ENCODE measurements at regions of chrX and their contacts with region 1.

Region 1: GRCh38 chrX:54529552-54530357 is at the start of gene GNL3L:
- DNase-seq: peak; percentile 71 to 94 (median 85)

Region 2: DNA sequence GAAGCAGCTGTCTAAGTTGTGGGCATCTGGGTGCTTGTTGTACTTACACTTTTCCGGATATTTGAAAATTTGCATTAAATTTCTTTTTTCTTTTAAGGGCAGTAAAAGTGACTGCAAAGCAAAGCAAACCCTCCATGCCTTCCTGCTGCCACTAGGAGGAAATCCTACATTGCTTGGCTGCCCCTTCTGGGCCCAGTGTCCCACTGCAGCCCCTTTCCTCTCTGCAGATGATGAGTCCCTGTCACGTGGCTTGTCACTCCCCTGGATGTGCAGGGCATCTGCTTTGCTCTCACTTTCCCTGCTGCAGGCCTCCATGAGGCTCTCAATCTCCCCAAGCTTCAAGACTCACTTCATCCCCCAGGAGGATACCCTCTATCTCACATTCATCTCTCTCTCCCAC is 76.8 kb before region 1 on chrX:
- intact Hi-C with region 1: no loop called
- DNase-seq: peak in 1 of 42 donors; percentile 27

Region 3: DNA sequence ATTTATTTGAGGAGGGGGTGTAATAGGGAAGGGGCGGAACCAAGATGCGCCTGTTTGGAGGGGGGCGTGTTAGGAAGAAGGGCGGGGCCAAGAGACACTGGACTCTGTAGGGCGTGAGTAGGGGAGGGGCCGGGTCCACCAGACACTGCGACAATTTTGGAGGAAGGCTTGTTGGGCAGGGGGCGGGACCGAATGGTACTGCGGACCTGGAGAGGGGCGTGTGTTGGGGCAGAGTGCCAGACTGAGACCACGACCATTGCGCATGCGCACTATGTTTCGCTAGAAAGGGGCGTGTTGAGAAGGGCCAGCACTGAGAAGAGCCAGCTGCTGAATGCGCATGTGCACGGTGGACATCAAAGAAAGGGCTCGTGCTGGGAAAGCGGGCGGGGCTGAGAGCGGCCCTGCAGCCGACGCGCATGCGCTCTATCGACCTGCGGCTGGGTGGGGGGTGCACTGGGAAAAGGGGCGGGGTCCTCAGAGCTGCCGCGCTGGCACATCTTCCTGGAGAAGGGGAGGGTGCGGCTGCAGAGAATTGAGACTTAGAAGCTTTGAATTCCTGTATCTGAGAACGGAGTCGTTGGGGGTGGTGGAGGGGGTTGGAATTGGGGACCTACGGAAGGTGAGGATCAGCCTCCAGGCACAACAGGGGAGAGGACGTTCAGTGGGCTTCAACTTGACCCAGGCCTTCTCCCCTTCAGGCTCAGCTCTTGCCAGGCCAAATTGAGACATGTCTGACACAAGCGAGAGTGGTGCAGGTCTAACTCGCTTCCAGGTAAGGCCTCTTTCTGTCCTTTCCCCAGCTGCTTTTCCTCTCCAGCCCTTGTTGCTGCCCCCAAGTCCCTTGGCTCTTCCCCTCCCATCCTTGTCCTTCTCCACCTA is 279.1 kb after region 1 on chrX:
- intact Hi-C with region 1: loop called (anchors 10 kb)
- DNase-seq: peak; percentile 80 to 95 (median 88)

Region 4: DNA sequence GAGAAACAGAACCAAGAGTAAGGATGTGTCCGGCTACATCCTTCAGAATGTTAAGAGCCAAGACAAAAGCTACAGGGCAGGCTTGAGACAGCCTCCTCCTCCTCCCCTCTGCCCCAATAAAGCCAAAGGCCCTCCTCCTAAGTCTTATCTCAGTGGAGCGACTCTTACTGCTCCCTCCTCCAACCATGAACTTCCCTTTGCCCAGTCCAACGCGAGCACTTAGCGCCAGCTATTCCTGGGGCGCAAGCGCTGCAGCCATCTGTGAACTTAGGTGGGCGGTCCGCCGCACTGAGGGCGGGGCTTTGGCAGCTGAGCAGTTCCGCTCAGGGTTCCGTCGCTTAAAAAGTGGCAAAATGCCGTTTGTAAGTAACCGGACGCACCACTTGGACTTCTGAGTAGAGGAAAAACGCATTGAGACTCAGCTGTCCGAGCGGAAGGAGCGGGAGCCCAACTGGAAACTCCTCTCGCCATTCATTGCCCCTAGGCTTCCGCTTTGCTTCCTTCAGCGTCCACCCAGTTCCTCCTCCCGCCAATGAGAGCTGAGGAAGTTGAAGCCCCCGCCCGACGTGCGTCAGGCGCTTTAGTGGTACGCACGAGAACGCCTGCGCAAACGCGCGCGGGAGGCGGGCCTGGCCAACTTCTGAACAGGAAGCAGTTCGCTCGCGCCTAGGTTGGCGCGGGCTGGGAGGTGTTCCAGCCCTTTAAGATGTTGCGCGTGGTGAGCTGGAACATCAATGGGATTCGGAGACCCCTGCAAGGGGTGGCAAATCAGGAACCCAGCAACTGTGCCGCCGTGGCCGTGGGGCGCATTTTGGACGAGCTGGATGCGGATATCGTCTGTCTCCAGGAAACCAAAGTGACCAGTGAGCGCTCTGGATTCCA is 470.2 kb after region 1 on chrX and contains the start of gene APEX2:
- intact Hi-C with region 1: loop called (anchors 10 kb)
- DNase-seq: peak; percentile 73 to 95 (median 90)

Measured in head of caudate nucleus (tissue), 42 donors.